ENCODE measurements at regions of chr6 and their contacts with region 1.

Region 1: DNA sequence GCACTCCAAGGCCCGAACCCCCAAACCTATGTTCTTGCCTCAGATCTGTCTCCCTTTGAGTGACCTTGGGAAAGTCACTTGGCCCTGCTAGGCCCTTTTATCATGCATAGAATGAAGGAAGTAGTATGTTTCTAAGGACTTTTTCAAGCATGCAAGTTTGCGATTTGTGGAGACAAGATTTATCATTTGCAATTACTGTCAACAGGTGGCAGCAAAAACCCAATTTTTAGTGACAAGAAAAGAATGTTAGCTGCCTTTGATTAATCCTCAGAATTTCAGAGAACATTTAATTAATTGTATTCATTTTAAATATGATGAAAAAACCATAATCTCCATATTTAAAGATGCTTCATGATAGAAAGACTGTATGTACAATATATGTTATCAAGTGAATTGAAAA is 28.3 kb upstream of the PREP start:
- DNase-seq: no peak
- H3K4me3 ChIP-seq: no peak overlapping the region
- H3K27ac ChIP-seq: no peak overlapping the region
- H3K4me1 ChIP-seq: peaks cover 0 to 3% (median 0%) of the 10 kb centered on the region in 4 experiments; a peak in 1 of 7 replicates
- H3K27me3 ChIP-seq: no peaks in the 10 kb centered on the region
- CTCF ChIP-seq: peak in 2 of 3 experiments; percentile 43 to 44; a peak in 2 of 4 replicates
- EP300 ChIP-seq: no peak
- POLR2A ChIP-seq: no peak
- RAD21 ChIP-seq: peak; percentile 68 to 70

Region 2: DNA sequence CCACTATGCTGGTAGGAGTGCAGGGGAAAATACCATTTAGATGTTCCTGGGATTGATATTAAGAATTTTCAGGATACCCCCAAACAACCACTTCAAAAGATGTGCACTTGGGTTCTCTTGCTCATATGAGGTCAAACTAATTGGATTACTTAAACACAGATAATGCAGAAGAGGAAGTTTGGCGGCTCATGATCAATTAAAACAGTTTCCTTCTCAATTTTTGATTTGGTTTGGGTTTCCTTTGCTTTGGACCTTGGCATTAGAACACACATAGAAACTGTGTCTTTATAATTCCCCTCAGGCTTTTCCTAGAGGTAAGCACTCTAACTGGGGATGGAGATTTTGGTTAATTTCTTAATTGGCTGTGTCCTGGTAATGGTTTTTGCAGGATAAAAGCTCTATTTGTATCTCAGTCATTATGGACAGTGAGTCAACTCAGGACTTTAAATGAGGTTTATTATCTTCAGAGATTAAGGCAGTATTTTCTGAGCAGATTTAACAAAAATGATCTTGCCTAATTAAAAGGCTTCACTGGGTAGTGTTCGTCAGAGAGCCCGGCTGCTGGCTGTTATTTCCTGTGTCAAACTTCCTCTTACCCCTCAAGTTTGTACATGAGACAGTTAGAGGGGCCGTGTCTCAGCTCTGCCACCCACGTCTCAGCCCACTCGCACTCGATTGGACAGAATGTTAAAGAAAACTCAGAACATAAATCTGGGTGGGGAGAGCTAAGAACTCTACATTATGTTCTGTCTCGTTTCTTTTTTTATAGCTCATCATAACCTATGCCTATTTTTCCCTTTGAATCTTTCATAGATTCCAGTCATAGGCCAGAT is 21.9 kb after region 1 on chr6:
- CTCF ChIA-PET with region 1: interaction called, 11 read pairs
- POLR2A ChIA-PET with region 1: no interaction called
- DNase-seq: no peak
- H3K4me3 ChIP-seq: no peak overlapping the region
- H3K27ac ChIP-seq: no peak overlapping the region
- H3K4me1 ChIP-seq: 0 out of 7 replicates have a peak, but pooled peaks cover 0 to 2% (median 0%) of the 10 kb centered on the region in 4 experiments
- H3K27me3 ChIP-seq: no peaks in the 10 kb centered on the region
- CTCF ChIP-seq: no peak
- EP300 ChIP-seq: no peak
- POLR2A ChIP-seq: no peak
- RAD21 ChIP-seq: no peak

Measured in H1 (cell line).